ENCODE measurements at regions of chr7 and their contacts with region 1.

Region 1: GRCh38 chr7:16918288-16918895 is 36.6 kb upstream of the AGR3 start:
- DNase-seq: peak in 1 of 2 donors; percentile 52
- ATAC-seq: no peak
- H3K4me3 ChIP-seq: no peak overlapping the region
- H3K4me3 Mint-ChIP-seq: no peak overlapping the region
- H3K27ac ChIP-seq: no peak overlapping the region
- H3K27ac Mint-ChIP-seq: no peak overlapping the region
- H3K4me1 ChIP-seq: no peaks in the 10 kb centered on the region
- H3K4me1 Mint-ChIP-seq: peaks cover 0 to 6% of the 10 kb centered on the region in 2 donors
- H3K27me3 ChIP-seq: no peaks in the 10 kb centered on the region
- H3K27me3 Mint-ChIP-seq: no peaks in the 10 kb centered on the region
- CTCF ChIP-seq: peak; percentile 85

Region 2: GRCh38 chr7:16695621-16696237 is 222.7 kb before region 1 on chr7:
- intact Hi-C with region 1: loop called (anchors 1 kb)
- DNase-seq: peak in 1 of 2 donors; percentile 11
- ATAC-seq: peak in 1 of 3 donors; percentile 50
- H3K4me3 ChIP-seq: no peak overlapping the region
- H3K4me3 Mint-ChIP-seq: no peak overlapping the region
- H3K27ac ChIP-seq: no peak overlapping the region
- H3K27ac Mint-ChIP-seq: no peak overlapping the region
- H3K4me1 ChIP-seq: no peaks in the 10 kb centered on the region
- H3K4me1 Mint-ChIP-seq: no peaks in the 10 kb centered on the region
- H3K27me3 ChIP-seq: no peaks in the 10 kb centered on the region
- H3K27me3 Mint-ChIP-seq: no peaks in the 10 kb centered on the region
- CTCF ChIP-seq: peak; percentile 30

Region 3: GRCh38 chr7:16891338-16891737 is 27.1 kb before region 1 on chr7:
- intact Hi-C with region 1: loop called (anchors 1 kb)
- DNase-seq: peak in 1 of 2 donors; percentile 59
- ATAC-seq: peak in 2 of 3 donors; percentile 36 to 70
- H3K4me3 ChIP-seq: no peak overlapping the region
- H3K4me3 Mint-ChIP-seq: no peak overlapping the region
- H3K27ac ChIP-seq: no peak overlapping the region
- H3K27ac Mint-ChIP-seq: no peak overlapping the region
- H3K4me1 ChIP-seq: no peaks in the 10 kb centered on the region
- H3K4me1 Mint-ChIP-seq: peaks cover 21 to 22% of the 10 kb centered on the region in 2 donors
- H3K27me3 ChIP-seq: no peaks in the 10 kb centered on the region
- H3K27me3 Mint-ChIP-seq: peaks cover 3 to 5% of the 10 kb centered on the region in 2 donors
- CTCF ChIP-seq: peak; percentile 24